IMR-90 (cell line): ENCODE measurements at regions of chr11 and their contacts with region 1.

Region 1: DNA sequence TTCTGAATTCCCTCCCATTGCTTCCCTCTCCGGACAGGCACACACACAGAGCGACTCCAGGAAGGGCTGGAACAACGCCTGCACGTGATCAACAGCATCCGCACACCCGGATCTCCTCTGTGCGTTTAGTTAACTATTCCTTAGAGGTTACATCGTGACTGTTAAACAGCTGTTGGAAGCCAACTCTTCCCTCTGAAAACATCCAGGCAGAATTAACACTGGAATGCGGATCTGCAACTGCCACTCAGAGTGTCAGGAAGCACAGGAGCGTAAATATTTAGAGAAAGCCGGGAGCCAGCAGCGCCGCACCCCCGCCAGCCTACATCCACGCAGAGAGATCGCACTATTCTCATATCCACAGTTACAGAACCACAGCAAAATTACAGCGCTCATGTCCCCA is 46.2 kb downstream of the SHANK2 start:
- DNase-seq: peak; percentile 66
- ATAC-seq: peak; percentile 90
- H3K4me3 ChIP-seq: no peak overlapping the region
- H3K27ac ChIP-seq: peak overlapping the region; percentile 73
- H3K4me1 ChIP-seq: peaks cover 10% of the 10 kb centered on the region
- H3K27me3 ChIP-seq: no peaks in the 10 kb centered on the region
- CTCF ChIP-seq: no peak
- POLR2A ChIP-seq: no peak
- RAD21 ChIP-seq: no peak

Region 2: DNA sequence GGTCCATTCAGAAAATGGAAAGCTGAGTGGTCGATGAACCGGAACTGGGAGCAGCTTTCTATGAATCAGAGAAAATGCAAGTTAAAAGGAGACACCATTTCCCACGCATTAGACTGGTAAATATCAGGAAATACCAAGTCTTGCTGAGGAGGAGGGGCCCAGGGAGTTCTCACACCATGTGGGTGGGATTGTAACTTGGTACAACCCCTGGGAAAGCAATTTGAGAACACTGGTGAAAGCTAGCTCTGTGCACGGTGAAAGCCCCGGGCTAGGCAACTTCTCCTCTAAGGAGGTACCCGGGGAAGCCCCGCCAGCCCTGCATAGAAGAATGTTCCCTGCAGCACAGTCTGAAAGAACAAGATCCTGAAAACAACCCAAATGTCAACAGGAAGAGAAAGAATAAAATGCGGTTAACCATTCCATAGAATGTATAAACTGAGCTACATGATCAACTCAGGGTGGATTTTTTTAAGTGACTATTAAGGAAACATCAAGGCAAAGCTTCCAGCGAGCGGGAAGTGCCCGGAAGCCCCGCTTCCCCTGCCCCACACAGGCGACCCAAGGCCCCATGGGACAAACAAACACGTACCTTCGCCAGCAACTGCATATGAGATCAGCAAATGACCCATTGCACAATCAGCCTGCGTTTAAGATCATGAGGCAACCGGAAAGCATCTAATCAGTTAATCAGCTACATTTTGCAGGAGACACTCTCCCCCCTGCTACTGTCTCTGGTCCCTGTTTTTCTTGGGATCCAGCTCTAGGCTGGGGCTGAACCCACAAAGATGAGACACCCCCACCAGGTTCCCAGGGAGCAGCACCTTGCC is 34.9 kb after region 1 on chr11:
- CTCF ChIA-PET with region 1: no interaction called
- POLR2A ChIA-PET with region 1: no interaction called
- dilution Hi-C with region 1: no loop called
- in situ Hi-C with region 1: no loop called
- intact Hi-C with region 1: loop called (anchors 5 kb)
- DNase-seq: peak; percentile 94
- ATAC-seq: peak; percentile 92
- H3K4me3 ChIP-seq: peak overlapping the region; percentile 4; the same call in 1 of the 2 replicates
- H3K27ac ChIP-seq: peak overlapping the region; percentile 90
- H3K4me1 ChIP-seq: peaks cover 9% of the 10 kb centered on the region
- H3K27me3 ChIP-seq: no peaks in the 10 kb centered on the region
- CTCF ChIP-seq: no peak
- POLR2A ChIP-seq: no peak; the same call in 1 of the 2 replicates
- RAD21 ChIP-seq: no peak